ENCODE measurements at regions of chr14 and their contacts with region 1.

Region 1: GRCh38 chr14:51979088-51979709 is 10.1 kb upstream of the RTRAF start:
- DNase-seq: peak; percentile 72
- ATAC-seq: peak; percentile 98
- H3K4me3 ChIP-seq: no peak overlapping the region
- H3K27ac ChIP-seq: no peak overlapping the region
- H3K4me1 ChIP-seq: peaks cover 0 to 6% of the 10 kb centered on the region in 2 experiments; a peak in 1 of 4 replicates
- H3K27me3 ChIP-seq: no peaks in the 10 kb centered on the region
- CTCF ChIP-seq: peak; percentile 73 to 95 (median 87)
- POLR2A ChIP-seq: no peak
- RAD21 ChIP-seq: peak; percentile 78

Region 2: GRCh38 chr14:51908086-51908485 is 71.1 kb before region 1 on chr14:
- CTCF ChIA-PET with region 1: no interaction called
- POLR2A ChIA-PET with region 1: no interaction called
- RAD21 ChIA-PET with region 1: no interaction called
- intact Hi-C with region 1: no loop called
- DNase-seq: no peak
- ATAC-seq: no peak
- H3K4me3 ChIP-seq: no peak overlapping the region
- H3K27ac ChIP-seq: no peak overlapping the region
- H3K4me1 ChIP-seq: peaks cover 0 to 6% of the 10 kb centered on the region in 2 experiments; a peak in 1 of 4 replicates
- H3K27me3 ChIP-seq: no peaks in the 10 kb centered on the region
- CTCF ChIP-seq: no peak
- POLR2A ChIP-seq: no peak
- RAD21 ChIP-seq: no peak

Region 3: DNA sequence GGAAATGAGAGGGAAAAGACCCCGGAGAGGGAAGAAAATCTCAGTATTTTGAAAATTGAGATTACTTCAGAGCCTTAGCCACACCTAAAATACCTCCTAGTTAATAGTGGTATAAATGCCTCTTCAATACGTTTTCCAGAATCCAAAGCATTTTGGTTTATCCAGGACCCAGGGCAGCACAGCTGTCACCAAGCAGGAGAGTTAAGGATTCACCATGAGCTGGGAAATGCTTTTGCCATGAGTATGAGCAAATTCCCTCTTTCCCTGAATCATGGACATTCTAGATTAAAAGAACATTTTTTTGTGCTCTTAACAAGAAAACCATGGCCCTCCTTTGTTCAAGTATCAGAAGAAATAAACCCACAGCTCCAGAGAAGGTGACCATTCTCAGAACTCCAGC is 11.7 kb before region 1 on chr14:
- CTCF ChIA-PET with region 1: interaction called, 18 read pairs
- POLR2A ChIA-PET with region 1: no interaction called
- RAD21 ChIA-PET with region 1: no interaction called
- intact Hi-C with region 1: no loop called
- DNase-seq: no peak
- ATAC-seq: no peak
- H3K4me3 ChIP-seq: no peak overlapping the region
- H3K27ac ChIP-seq: no peak overlapping the region
- H3K4me1 ChIP-seq: no peaks in the 10 kb centered on the region
- H3K27me3 ChIP-seq: peaks cover 7% of the 10 kb centered on the region; the same call in 1 of the 2 replicates
- CTCF ChIP-seq: no peak
- POLR2A ChIP-seq: no peak
- RAD21 ChIP-seq: no peak